Heart left ventricle (tissue), 16 donors: ENCODE measurements at regions of chr12 and their contacts with region 1.

Region 1: DNA sequence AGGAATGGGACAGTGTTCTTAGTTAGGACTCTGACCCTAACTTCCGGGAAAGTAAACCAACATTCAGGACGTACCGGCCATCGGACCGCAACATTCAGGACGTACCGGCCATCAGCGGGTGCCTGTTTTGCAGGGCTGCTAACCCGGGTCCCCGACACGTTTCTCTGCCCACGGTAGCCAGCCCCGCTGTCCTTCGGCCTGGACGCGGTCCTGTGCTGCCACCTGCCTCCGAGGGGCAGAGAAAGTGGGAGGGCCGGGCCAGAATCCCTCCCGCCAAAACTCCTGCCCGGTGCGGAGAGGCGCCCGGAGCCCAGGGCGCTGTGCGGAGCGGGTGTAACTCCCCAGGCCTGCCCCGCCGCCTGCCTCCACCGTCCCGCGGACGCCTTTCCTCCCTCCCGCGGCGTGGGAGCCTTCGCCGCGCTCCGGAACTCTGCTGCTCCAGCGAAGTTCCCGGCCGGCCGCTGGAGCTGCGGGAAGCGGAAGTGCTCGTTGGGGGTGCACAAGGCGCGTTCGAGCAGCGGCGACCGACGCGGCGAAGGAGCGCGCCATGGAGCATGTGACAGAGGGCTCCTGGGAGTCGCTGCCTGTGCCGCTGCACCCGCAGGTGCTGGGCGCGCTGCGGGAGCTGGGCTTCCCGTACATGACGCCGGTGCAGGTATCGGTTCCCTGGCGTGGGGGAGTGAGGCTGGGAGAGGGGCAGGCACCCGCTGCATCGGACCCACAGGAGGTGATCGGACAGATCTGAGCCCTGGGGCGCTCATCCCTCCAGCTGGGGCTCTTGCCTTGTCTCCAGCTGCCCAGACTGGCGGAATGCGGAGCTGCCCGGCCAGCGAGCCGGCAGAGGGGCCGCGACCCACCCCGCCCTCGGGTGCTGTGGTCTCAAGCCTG is at the start of gene DDX55:
- DNase-seq: peak; percentile 83 to 91 (median 85)
- ATAC-seq: peak; percentile 88 to 98 (median 98)
- H3K4me3 ChIP-seq: peak within 1 kb of the TSS; percentile 66 to 100 (median 89)
- H3K27ac ChIP-seq: peak within 1 kb of the TSS; percentile 60 to 95 (median 87)
- H3K4me1 ChIP-seq: peaks cover 0 to 24% (median 12%) of the 10 kb centered on the region in 12 donors
- H3K27me3 ChIP-seq: no peaks in the 10 kb centered on the region
- CTCF ChIP-seq: peak; percentile 30 to 90 (median 66)
- POLR2A ChIP-seq: peak in 1 of 2 donors; percentile 64
- total RNA-seq, gene DDX55: 3.9 to 15.3 (median 5.1) TPM

Region 2: DNA sequence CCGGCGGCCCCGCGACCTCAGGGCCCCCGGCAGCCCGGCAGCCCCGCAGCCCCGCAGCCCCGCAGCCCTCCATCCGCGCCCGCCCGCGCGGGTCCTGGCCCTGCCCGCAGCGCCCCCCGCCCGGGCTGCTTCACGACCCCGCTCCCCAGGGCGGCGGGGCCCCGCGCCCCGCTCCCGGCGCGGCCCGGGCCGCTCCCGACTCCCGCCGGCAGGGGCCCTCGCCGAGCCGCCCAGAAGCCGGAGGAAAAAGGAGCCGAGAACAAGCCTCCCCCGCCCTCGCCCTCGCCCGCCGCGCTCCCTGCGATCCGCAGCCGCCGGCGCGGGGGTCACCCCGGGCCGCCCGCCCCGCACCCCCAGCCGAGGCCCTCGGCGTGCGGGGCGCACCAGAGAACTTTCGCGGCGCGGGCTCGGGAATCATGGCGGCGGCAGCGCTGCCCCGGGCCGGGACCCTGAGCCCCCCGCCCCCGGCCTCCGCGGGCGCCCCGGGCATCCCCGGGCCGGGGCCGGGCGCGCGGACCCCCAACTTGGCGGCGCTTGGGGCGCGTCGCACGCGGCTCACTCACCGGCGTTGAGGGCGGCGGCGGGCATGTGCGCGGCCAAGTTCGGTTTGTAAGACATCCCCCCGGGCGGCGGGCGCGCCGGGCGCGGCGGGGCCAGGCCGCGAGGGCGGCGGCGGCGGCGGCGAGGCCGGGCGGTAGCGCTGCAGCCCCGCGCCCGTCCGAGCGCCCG is 330.7 kb before region 1 on chr12:
- intact Hi-C with region 1: loop called in 3 of 10 experiments (anchors 1 to 10 kb)
- DNase-seq: peak; percentile 74 to 88 (median 84)
- ATAC-seq: peak in 3 of 4 donors; percentile 56 to 62 (median 58)
- H3K4me3 ChIP-seq: peak overlapping the region; percentile 61 to 93 (median 76)
- H3K27ac ChIP-seq: peak overlapping the region; percentile 58 to 93 (median 84)
- H3K4me1 ChIP-seq: peaks cover 3 to 39% (median 29%) of the 10 kb centered on the region in 12 donors
- H3K27me3 ChIP-seq: no peaks in the 10 kb centered on the region
- CTCF ChIP-seq: peak; percentile 1 to 75 (median 47)
- POLR2A ChIP-seq: no peak